ENCODE measurements at regions of chr11 and their contacts with region 1.

Region 1: GRCh38 chr11:123357961-123358841 is 71.9 kb upstream of the GRAMD1B start:
- DNase-seq: peak; percentile 71
- H3K4me3 Mint-ChIP-seq: peak overlapping the region; percentile 82
- H3K27ac Mint-ChIP-seq: peak overlapping the region; percentile 70
- H3K4me1 Mint-ChIP-seq: peaks cover 36% of the 10 kb centered on the region
- H3K27me3 Mint-ChIP-seq: peaks cover 27% of the 10 kb centered on the region

Region 2: DNA sequence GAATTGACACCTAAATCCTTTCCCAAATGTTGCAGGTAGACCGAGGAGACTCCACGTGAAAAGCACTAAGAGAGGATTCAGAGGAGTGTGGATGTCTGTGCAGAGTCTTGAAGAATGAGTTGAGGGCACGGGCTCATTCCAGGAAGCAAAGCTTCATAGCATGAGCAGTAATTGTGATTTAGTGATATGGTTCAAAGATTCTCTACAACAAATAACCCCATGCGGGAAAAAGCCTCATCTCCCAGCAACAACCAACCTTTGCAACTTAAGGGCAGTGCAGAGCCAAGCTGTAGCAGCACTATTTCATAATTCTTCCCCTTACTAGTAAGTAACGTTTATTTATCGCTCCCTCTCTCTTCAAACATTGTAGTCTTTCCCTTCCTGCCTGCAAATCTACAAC is 75.6 kb before region 1 on chr11:
- CTCF ChIA-PET with region 1: no interaction called
- POLR2A ChIA-PET with region 1: no interaction called
- intact Hi-C with region 1: no loop called
- DNase-seq: no peak
- H3K4me3 Mint-ChIP-seq: no peak overlapping the region
- H3K27ac Mint-ChIP-seq: no peak overlapping the region
- H3K4me1 Mint-ChIP-seq: no peaks in the 10 kb centered on the region
- H3K27me3 Mint-ChIP-seq: peaks cover 25% of the 10 kb centered on the region

Region 3: DNA sequence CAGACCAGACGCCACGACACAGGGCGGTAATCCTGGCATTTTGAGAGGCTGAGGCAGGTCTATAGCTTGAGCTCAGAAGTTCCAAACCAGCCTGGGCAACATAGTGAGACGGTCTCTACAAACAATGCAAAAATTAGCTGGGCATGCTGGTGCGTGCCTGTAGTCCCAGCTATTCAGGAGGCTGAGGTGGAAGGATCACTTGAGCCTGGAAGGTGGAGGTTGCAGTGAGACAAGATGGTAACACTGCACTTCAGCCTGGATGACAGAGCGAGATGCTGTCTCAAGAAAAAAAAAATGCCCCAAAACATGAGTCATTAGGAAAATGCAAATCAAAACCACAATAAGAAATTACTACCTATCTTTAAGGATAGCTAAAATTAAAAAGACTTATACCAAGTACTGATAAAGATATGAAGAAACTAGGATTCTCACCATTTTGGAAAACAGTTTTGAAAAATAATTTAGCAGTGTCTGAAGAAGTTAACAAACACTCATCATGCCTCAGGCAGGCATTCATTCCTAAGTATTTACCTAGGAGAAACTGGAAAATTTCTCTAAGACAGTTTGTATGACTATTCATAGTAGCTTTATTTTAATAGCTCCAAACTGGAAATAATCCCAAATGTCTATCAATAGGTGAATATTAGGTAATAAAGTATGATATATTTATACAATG is 19.7 kb before region 1 on chr11:
- CTCF ChIA-PET with region 1: interaction called, 11 read pairs
- POLR2A ChIA-PET with region 1: interaction called, 4 read pairs
- intact Hi-C with region 1: loop called (anchors 2 kb)
- DNase-seq: no peak
- H3K4me3 Mint-ChIP-seq: no peak overlapping the region
- H3K27ac Mint-ChIP-seq: no peak overlapping the region
- H3K4me1 Mint-ChIP-seq: peaks cover 9% of the 10 kb centered on the region
- H3K27me3 Mint-ChIP-seq: peaks cover 11% of the 10 kb centered on the region

Region 4: GRCh38 chr11:123429913-123430720 is 71.9 kb after region 1 on chr11 and contains the start of gene GRAMD1B:
- CTCF ChIA-PET with region 1: interaction called, 6 read pairs
- POLR2A ChIA-PET with region 1: interaction called, 3 read pairs
- intact Hi-C with region 1: loop called (anchors 1 kb)
- DNase-seq: peak; percentile 85
- H3K4me3 Mint-ChIP-seq: peak within 1 kb of the TSS; percentile 85
- H3K27ac Mint-ChIP-seq: peak within 1 kb of the TSS; percentile 90
- H3K4me1 Mint-ChIP-seq: peaks cover 40% of the 10 kb centered on the region
- H3K27me3 Mint-ChIP-seq: no peaks in the 10 kb centered on the region
- total RNA-seq, gene GRAMD1B: 36.8 to 39.0 TPM

Measured in activated CD4-positive, alpha-beta memory T cell treated with anti-CD3 and anti-CD28 coated beads for 36 hours (primary cell).